ENCODE measurements at regions of chr1 and their contacts with region 1.

Region 1: GRCh38 chr1:27154991-27155781 is at the start of gene SLC9A1:
- DNase-seq: peak; percentile 97
- ATAC-seq: peak; percentile 95
- H3K4me3 ChIP-seq: peak within 1 kb of the TSS; percentile 78
- H3K27ac ChIP-seq: peak within 1 kb of the TSS; percentile 92
- H3K4me1 ChIP-seq: peaks cover 46% of the 10 kb centered on the region
- H3K27me3 ChIP-seq: no peaks in the 10 kb centered on the region
- CTCF ChIP-seq: peak; percentile 81
- total RNA-seq, gene SLC9A1: 62.4 TPM

Region 2: DNA sequence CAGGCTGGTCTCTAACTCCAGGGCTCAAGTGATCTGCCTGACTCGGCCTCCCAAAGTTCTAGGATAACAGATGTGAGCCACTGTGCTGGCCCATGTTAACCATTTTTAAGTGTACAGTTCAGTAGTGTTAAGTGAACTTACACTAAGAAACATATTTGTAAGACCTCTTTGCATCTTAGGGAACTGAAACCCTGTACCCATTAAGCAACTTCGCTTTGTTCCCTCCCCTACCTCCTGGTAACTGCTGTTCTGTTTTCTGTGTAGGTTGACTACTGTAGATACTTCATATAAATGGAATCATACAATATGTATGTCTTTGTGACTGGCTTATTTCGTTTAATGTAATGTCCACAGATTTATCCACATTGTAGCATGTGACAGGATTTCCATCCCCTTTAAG is 222.7 kb before region 1 on chr1:
- intact Hi-C with region 1: no loop called
- DNase-seq: no peak
- ATAC-seq: peak; percentile 87
- H3K4me3 ChIP-seq: no peak overlapping the region
- H3K27ac ChIP-seq: no peak overlapping the region
- H3K4me1 ChIP-seq: no peaks in the 10 kb centered on the region
- H3K27me3 ChIP-seq: no peaks in the 10 kb centered on the region
- CTCF ChIP-seq: no peak

Region 3: GRCh38 chr1:27057801-27058625 is 97.2 kb before region 1 on chr1:
- intact Hi-C with region 1: no loop called
- DNase-seq: no peak
- ATAC-seq: no peak
- H3K4me3 ChIP-seq: no peak overlapping the region
- H3K27ac ChIP-seq: no peak overlapping the region
- H3K4me1 ChIP-seq: no peaks in the 10 kb centered on the region
- H3K27me3 ChIP-seq: no peaks in the 10 kb centered on the region
- CTCF ChIP-seq: no peak

Region 4: GRCh38 chr1:27116697-27117096 is 38.5 kb before region 1 on chr1:
- intact Hi-C with region 1: loop called (anchors 5 kb)
- DNase-seq: no peak
- ATAC-seq: peak; percentile 29
- H3K4me3 ChIP-seq: no peak overlapping the region
- H3K27ac ChIP-seq: peak overlapping the region; percentile 75
- H3K4me1 ChIP-seq: peaks cover 87% of the 10 kb centered on the region
- H3K27me3 ChIP-seq: no peaks in the 10 kb centered on the region
- CTCF ChIP-seq: no peak

Region 5: GRCh38 chr1:27203946-27204345 is 48.8 kb after region 1 on chr1:
- intact Hi-C with region 1: no loop called
- DNase-seq: no peak
- ATAC-seq: no peak
- H3K4me3 ChIP-seq: no peak overlapping the region
- H3K27ac ChIP-seq: no peak overlapping the region
- H3K4me1 ChIP-seq: no peaks in the 10 kb centered on the region
- H3K27me3 ChIP-seq: no peaks in the 10 kb centered on the region
- CTCF ChIP-seq: no peak

Measured in upper lobe of right lung (tissue), 1 donor.